ENCODE measurements at regions of chr1 and their contacts with region 1.

Region 1: GRCh38 chr1:169546087-169546995 is 39.9 kb downstream of the F5 start:
- DNase-seq: peak; percentile 14
- H3K4me3 ChIP-seq: no peak overlapping the region; a peak in 1 of 4 replicates
- H3K27ac ChIP-seq: no peak overlapping the region
- H3K4me1 ChIP-seq: no peaks in the 10 kb centered on the region
- H3K27me3 ChIP-seq: no peaks in the 10 kb centered on the region; the same call in 1 of the 2 replicates
- CTCF ChIP-seq: peak; percentile 90
- EP300 ChIP-seq: no peak
- RAD21 ChIP-seq: peak; percentile 80

Region 2: DNA sequence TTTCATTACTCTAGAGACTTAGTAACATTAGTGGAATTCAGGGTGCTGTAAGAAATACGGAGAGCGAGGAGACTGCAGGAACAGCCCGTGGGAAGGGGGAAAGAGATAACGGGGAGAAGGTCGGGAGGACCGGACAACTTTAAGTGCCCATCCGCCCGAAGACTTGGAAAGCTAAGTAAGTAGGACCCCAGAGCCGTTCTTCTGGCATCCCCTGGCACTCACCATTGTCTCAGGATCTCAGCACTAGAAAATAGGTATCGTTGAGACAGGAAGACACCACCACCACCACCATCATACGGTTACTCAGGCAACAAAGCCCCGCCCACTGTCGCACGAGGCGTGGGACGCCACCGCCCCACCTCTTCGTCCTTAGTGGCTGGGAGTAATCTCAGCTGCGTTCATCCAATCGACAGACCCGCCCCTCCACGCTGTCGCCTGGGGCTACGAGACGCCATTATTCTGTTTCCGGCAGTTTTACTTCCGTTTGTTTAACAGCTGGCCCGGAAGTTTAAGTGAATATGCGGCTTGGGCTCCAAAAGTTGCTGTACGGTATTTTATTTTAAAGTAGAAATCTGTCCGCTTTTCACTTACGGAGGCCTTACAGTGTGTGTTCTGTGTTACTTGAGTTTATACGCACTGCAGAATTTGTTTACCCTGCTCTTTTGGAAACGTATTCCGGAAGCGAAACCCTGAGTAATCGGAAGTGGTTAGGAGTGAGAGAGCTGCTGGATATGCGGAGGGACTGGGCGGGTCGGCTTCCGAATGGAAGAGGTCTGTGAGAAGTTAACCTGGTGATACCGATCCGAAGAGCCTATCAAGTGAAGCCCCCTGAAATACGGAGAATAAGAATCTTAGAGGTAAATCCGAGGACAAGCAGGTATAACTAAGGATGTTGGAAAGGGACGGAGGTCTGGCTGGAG is 178.6 kb before region 1 on chr1 and contains the starts of genes BLZF1 and NME7:
- CTCF ChIA-PET with region 1: interaction called, 12 read pairs
- POLR2A ChIA-PET with region 1: interaction called, 3 read pairs
- DNase-seq: peak; percentile 84
- H3K4me3 ChIP-seq: peak within 1 kb of the TSS; percentile 84 to 96
- H3K27ac ChIP-seq: peak within 1 kb of the TSS; percentile 90 to 98
- H3K4me1 ChIP-seq: peaks cover 7 to 25% of the 10 kb centered on the region in 2 experiments; a peak in 3 of 4 replicates
- H3K27me3 ChIP-seq: no peaks in the 10 kb centered on the region
- CTCF ChIP-seq: no peak
- EP300 ChIP-seq: no peak
- RAD21 ChIP-seq: no peak
- polyA plus RNA-seq, gene BLZF1: 9.5 and 16.0 TPM in 2 replicates
- polyA plus RNA-seq, gene NME7: 13.7 and 20.6 TPM in 2 replicates

Region 3: GRCh38 chr1:169466259-169467230 is 79.8 kb before region 1 on chr1:
- CTCF ChIA-PET with region 1: interaction called, 25 read pairs
- POLR2A ChIA-PET with region 1: no interaction called
- DNase-seq: peak; percentile 22
- H3K4me3 ChIP-seq: no peak overlapping the region
- H3K27ac ChIP-seq: no peak overlapping the region
- H3K4me1 ChIP-seq: no peaks in the 10 kb centered on the region
- H3K27me3 ChIP-seq: no peaks in the 10 kb centered on the region
- CTCF ChIP-seq: peak; percentile 70
- EP300 ChIP-seq: no peak
- RAD21 ChIP-seq: peak; percentile 69

Region 4: GRCh38 chr1:169530448-169530847 is 15.9 kb before region 1 on chr1:
- CTCF ChIA-PET with region 1: interaction called, 10 read pairs
- POLR2A ChIA-PET with region 1: no interaction called
- DNase-seq: no peak
- H3K4me3 ChIP-seq: no peak overlapping the region
- H3K27ac ChIP-seq: no peak overlapping the region
- H3K4me1 ChIP-seq: no peaks in the 10 kb centered on the region; a peak in 1 of 4 replicates
- H3K27me3 ChIP-seq: no peaks in the 10 kb centered on the region
- CTCF ChIP-seq: no peak
- EP300 ChIP-seq: no peak
- RAD21 ChIP-seq: no peak

Region 5: GRCh38 chr1:169557131-169557530 is 10.8 kb after region 1 on chr1:
- CTCF ChIA-PET with region 1: interaction called, 15 read pairs
- POLR2A ChIA-PET with region 1: no interaction called
- DNase-seq: no peak
- H3K4me3 ChIP-seq: no peak overlapping the region
- H3K27ac ChIP-seq: no peak overlapping the region
- H3K4me1 ChIP-seq: no peaks in the 10 kb centered on the region
- H3K27me3 ChIP-seq: peaks cover 6% of the 10 kb centered on the region; the same call in 1 of the 2 replicates
- CTCF ChIP-seq: no peak
- EP300 ChIP-seq: no peak
- RAD21 ChIP-seq: no peak

Region 6: DNA sequence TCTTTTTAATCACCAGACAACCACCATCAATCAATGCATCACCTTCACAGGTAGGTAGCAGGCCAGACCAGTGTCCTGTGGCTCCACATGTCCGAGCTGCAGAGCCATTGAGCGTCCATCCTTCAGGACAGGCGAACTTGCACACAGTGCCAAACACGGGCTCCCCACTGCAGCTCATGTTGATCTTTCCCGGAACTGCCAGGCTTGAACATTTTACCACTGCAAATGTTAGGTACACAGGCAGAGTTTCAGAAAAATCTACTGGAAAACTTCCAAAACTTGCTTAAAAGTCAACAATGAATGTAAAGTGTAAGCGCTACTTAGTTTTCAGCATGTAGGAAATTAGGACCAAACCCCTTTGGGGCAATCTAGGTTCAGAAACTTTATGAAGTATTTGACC is 181.0 kb after region 1 on chr1:
- CTCF ChIA-PET with region 1: no interaction called
- POLR2A ChIA-PET with region 1: no interaction called
- DNase-seq: no peak
- H3K4me3 ChIP-seq: no peak overlapping the region
- H3K27ac ChIP-seq: no peak overlapping the region
- H3K4me1 ChIP-seq: no peaks in the 10 kb centered on the region; a peak in 2 of 4 replicates
- H3K27me3 ChIP-seq: no peaks in the 10 kb centered on the region
- CTCF ChIP-seq: no peak
- EP300 ChIP-seq: no peak
- RAD21 ChIP-seq: no peak

Region 7: GRCh38 chr1:169809370-169810095 is 263.2 kb after region 1 on chr1:
- CTCF ChIA-PET with region 1: interaction called, 24 read pairs
- POLR2A ChIA-PET with region 1: no interaction called
- DNase-seq: peak; percentile 39
- H3K4me3 ChIP-seq: no peak overlapping the region; a peak in 1 of 4 replicates
- H3K27ac ChIP-seq: no peak overlapping the region
- H3K4me1 ChIP-seq: no peaks in the 10 kb centered on the region
- H3K27me3 ChIP-seq: no peaks in the 10 kb centered on the region
- CTCF ChIP-seq: peak; percentile 75
- EP300 ChIP-seq: no peak
- RAD21 ChIP-seq: peak; percentile 66

Measured in SK-N-SH (cell line).